ENCODE measurements at regions of chr2 and their contacts with region 1.

Region 1: GRCh38 chr2:159118115-159118858 is 149.8 kb downstream of the TANC1 start:
- DNase-seq: peak; percentile 28 to 77
- ATAC-seq: peak; percentile 96 to 98
- H3K4me3 ChIP-seq: no peak overlapping the region
- H3K27ac ChIP-seq: no peak overlapping the region
- H3K4me1 ChIP-seq: peaks cover 6% of the 10 kb centered on the region; the same call in 2 of the 3 replicates
- CTCF ChIP-seq: peak; percentile 97
- EP300 ChIP-seq: no peak
- POLR2A ChIP-seq: no peak
- RAD21 ChIP-seq: peak; percentile 97 to 98

Region 2: GRCh38 chr2:158903711-158904443 is 214.4 kb before region 1 on chr2:
- CTCF ChIA-PET with region 1: interaction called, 150 read pairs
- POLR2A ChIA-PET with region 1: no interaction called
- DNase-seq: no peak
- ATAC-seq: no peak
- H3K4me3 ChIP-seq: no peak overlapping the region
- H3K27ac ChIP-seq: no peak overlapping the region
- H3K4me1 ChIP-seq: no peaks in the 10 kb centered on the region
- CTCF ChIP-seq: no peak
- EP300 ChIP-seq: no peak
- POLR2A ChIP-seq: no peak
- RAD21 ChIP-seq: no peak

Region 3: DNA sequence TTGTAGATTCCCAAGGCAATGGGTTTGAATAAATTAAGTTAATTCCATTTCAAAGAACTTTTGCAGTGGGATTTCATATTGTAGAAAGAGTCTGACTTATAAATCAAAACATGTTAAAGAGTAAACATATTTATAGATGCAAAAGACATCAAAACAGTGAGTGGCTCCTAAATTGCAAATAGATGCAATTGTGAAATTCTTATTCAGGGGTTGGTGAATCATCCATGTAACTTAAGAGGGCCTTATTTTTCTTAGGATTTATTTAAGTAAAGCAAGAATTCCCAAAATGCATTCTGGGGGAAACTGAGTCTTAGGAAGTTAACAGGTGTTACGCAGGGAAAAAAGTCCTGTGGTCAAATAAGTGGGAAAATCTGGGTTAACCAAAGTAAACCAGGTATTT is 138.5 kb before region 1 on chr2:
- CTCF ChIA-PET with region 1: interaction called, 12 read pairs
- POLR2A ChIA-PET with region 1: no interaction called
- DNase-seq: no peak
- ATAC-seq: no peak
- H3K4me3 ChIP-seq: no peak overlapping the region
- H3K27ac ChIP-seq: no peak overlapping the region
- H3K4me1 ChIP-seq: peaks cover 12% of the 10 kb centered on the region; the same call in 2 of the 3 replicates
- CTCF ChIP-seq: no peak
- EP300 ChIP-seq: no peak
- POLR2A ChIP-seq: no peak
- RAD21 ChIP-seq: no peak

Region 4: GRCh38 chr2:159035790-159036411 is 82.4 kb before region 1 on chr2:
- CTCF ChIA-PET with region 1: interaction called, 12 read pairs
- POLR2A ChIA-PET with region 1: no interaction called
- DNase-seq: peak; percentile 10 to 64
- ATAC-seq: peak; percentile 73 to 89; a peak in 5 of 6 replicates
- H3K4me3 ChIP-seq: no peak overlapping the region
- H3K27ac ChIP-seq: no peak overlapping the region
- H3K4me1 ChIP-seq: peaks cover 10% of the 10 kb centered on the region
- CTCF ChIP-seq: peak; percentile 26; the same call in 2 of the 3 replicates
- EP300 ChIP-seq: no peak
- POLR2A ChIP-seq: no peak
- RAD21 ChIP-seq: peak; percentile 58 to 62

Region 5: GRCh38 chr2:159131914-159132281 is 13.6 kb after region 1 on chr2:
- CTCF ChIA-PET with region 1: interaction called, 30 read pairs
- POLR2A ChIA-PET with region 1: no interaction called
- DNase-seq: peak in 1 of 2 experiments; percentile 22
- ATAC-seq: peak; percentile 61 to 63; a peak in 4 of 6 replicates
- H3K4me3 ChIP-seq: no peak overlapping the region
- H3K27ac ChIP-seq: peak overlapping the region; percentile 26 to 71; a peak in 4 of 6 replicates
- H3K4me1 ChIP-seq: peaks cover 14% of the 10 kb centered on the region
- CTCF ChIP-seq: no peak
- EP300 ChIP-seq: no peak
- POLR2A ChIP-seq: no peak
- RAD21 ChIP-seq: no peak

Region 6: GRCh38 chr2:159140070-159140769 is 21.9 kb after region 1 on chr2:
- CTCF ChIA-PET with region 1: interaction called, 13 read pairs
- POLR2A ChIA-PET with region 1: no interaction called
- DNase-seq: no peak
- ATAC-seq: no peak
- H3K4me3 ChIP-seq: no peak overlapping the region
- H3K27ac ChIP-seq: peak overlapping the region in 1 of 2 experiments; percentile 68; a peak in 3 of 6 replicates
- H3K4me1 ChIP-seq: peaks cover 14% of the 10 kb centered on the region; the same call in 2 of the 3 replicates
- CTCF ChIP-seq: no peak
- EP300 ChIP-seq: no peak
- POLR2A ChIP-seq: no peak
- RAD21 ChIP-seq: no peak

Measured in A549 (cell line).